Transverse colon (tissue), 4 donors: ENCODE measurements at regions of chr20 and their contacts with region 1.

Region 1: DNA sequence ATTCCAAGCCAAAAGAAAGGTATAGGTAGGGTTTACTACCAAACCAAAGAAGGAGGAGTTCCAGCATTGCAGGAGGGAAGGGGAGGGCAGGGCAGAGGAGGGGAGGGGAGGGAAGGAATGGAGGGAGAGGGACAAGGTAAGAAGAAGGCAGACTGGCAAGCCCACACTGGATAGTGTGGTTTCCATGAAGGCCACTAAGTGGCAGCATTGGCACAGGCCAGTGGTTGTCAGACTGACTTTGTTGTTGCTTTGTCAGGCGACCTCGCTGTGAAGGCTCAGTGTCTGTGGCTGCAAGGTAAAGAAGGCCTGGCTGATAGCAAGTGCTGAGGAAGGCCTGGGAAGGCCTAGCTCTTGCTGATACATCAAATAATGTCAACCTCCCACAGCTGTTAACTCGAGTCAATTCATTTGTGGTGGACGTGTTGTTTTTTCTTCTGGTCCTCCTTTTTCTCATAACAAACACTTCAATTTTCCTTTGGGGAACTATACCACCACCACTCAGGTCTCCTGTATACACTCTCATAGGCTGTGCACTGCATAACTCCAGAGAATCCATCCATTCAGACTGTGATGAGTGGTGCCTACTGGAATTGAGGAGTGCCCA is 7.7 kb upstream of the ZNF334 start:
- DNase-seq: peak; percentile 44
- H3K4me3 ChIP-seq: no peak overlapping the region
- H3K27ac ChIP-seq: no peak overlapping the region
- H3K4me1 ChIP-seq: no peaks in the 10 kb centered on the region
- H3K27me3 ChIP-seq: peaks cover 28% of the 10 kb centered on the region
- CTCF ChIP-seq: peak; percentile 45 to 63 (median 58)
- EP300 ChIP-seq: no peak
- POLR2A ChIP-seq: no peak

Region 2: GRCh38 chr20:46674253-46675083 is 153.4 kb after region 1 on chr20:
- in situ Hi-C with region 1: loop called in 2 of 4 experiments (anchors 10 to 25 kb)
- intact Hi-C with region 1: no loop called
- DNase-seq: no peak
- H3K4me3 ChIP-seq: no peak overlapping the region
- H3K27ac ChIP-seq: no peak overlapping the region
- H3K4me1 ChIP-seq: no peaks in the 10 kb centered on the region
- H3K27me3 ChIP-seq: no peaks in the 10 kb centered on the region
- CTCF ChIP-seq: no peak
- EP300 ChIP-seq: no peak
- POLR2A ChIP-seq: no peak

Region 3: GRCh38 chr20:46689082-46689754 is 168.1 kb after region 1 on chr20 and contains the start of gene TP53RK:
- in situ Hi-C with region 1: loop called in 2 of 4 experiments (anchors 10 to 25 kb)
- intact Hi-C with region 1: no loop called
- DNase-seq: peak; percentile 99
- H3K4me3 ChIP-seq: peak within 1 kb of the TSS; percentile 66 to 94 (median 86)
- H3K27ac ChIP-seq: peak within 1 kb of the TSS; percentile 97 to 99 (median 98)
- H3K4me1 ChIP-seq: peaks cover 8 to 30% (median 24%) of the 10 kb centered on the region in 4 donors
- H3K27me3 ChIP-seq: no peaks in the 10 kb centered on the region
- CTCF ChIP-seq: peak; percentile 40 to 84 (median 44)
- EP300 ChIP-seq: no peak
- POLR2A ChIP-seq: peak; percentile 90
- total RNA-seq, gene TP53RK: 12.4 to 26.7 (median 18.3) TPM